ENCODE measurements at regions of chr16 and their contacts with region 1.

Region 1: GRCh38 chr16:68214726-68215125 is 21.2 kb downstream of the ESRP2 start:
- DNase-seq: no peak
- H3K4me3 Mint-ChIP-seq: no peak overlapping the region
- H3K27ac Mint-ChIP-seq: peak overlapping the region; percentile 38
- H3K4me1 Mint-ChIP-seq: peaks cover 27% of the 10 kb centered on the region
- H3K27me3 Mint-ChIP-seq: no peaks in the 10 kb centered on the region

Region 2: GRCh38 chr16:68200088-68200783 is 14.5 kb before region 1 on chr16:
- intact Hi-C with region 1: loop called (anchors 1 kb)
- DNase-seq: no peak
- H3K4me3 Mint-ChIP-seq: no peak overlapping the region
- H3K27ac Mint-ChIP-seq: peak overlapping the region; percentile 62
- H3K4me1 Mint-ChIP-seq: peaks cover 15% of the 10 kb centered on the region
- H3K27me3 Mint-ChIP-seq: no peaks in the 10 kb centered on the region